ENCODE measurements at regions of chr2 and their contacts with region 1.

Region 1: GRCh38 chr2:27191053-27191829 is 20.6 kb upstream of the ATRAID start:
- DNase-seq: no peak
- ATAC-seq: peak; percentile 77
- H3K4me3 Mint-ChIP-seq: no peak overlapping the region
- H3K27ac Mint-ChIP-seq: no peak overlapping the region
- H3K4me1 Mint-ChIP-seq: no peaks in the 10 kb centered on the region
- H3K27me3 Mint-ChIP-seq: peaks cover 4% of the 10 kb centered on the region
- CTCF ChIP-seq: no peak

Region 2: GRCh38 chr2:26959331-26959730 is 231.9 kb before region 1 on chr2:
- CTCF ChIA-PET with region 1: interaction called, 20 read pairs
- POLR2A ChIA-PET with region 1: no interaction called
- intact Hi-C with region 1: loop called (anchors 1 kb)
- DNase-seq: no peak
- ATAC-seq: no peak
- H3K4me3 Mint-ChIP-seq: no peak overlapping the region
- H3K27ac Mint-ChIP-seq: no peak overlapping the region
- H3K4me1 Mint-ChIP-seq: no peaks in the 10 kb centered on the region
- H3K27me3 Mint-ChIP-seq: peaks cover 21% of the 10 kb centered on the region
- CTCF ChIP-seq: no peak

Region 3: GRCh38 chr2:27095745-27096651 is 95.2 kb before region 1 on chr2:
- CTCF ChIA-PET with region 1: interaction called, 8 read pairs
- POLR2A ChIA-PET with region 1: no interaction called
- intact Hi-C with region 1: loop called (anchors 1 kb)
- DNase-seq: no peak
- ATAC-seq: peak; percentile 98
- H3K4me3 Mint-ChIP-seq: peak overlapping the region; percentile 81
- H3K27ac Mint-ChIP-seq: no peak overlapping the region
- H3K4me1 Mint-ChIP-seq: peaks cover 11% of the 10 kb centered on the region
- H3K27me3 Mint-ChIP-seq: no peaks in the 10 kb centered on the region
- CTCF ChIP-seq: no peak

Measured in activated B cell treated with CpG ODN at 0.5 μM for 24 hours (primary cell).